Kidney (tissue), 22 donors: ENCODE measurements at regions of chr7 and their contacts with region 1.

Region 1: GRCh38 chr7:29105752-29106668 is 40.3 kb downstream of the CPVL start:
- DNase-seq: peak in 4 of 5 donors; percentile 75 to 93 (median 82)
- H3K4me3 ChIP-seq: no peak overlapping the region
- H3K27ac ChIP-seq: no peak overlapping the region
- H3K4me1 ChIP-seq: peaks cover 8 to 19% (median 14%) of the 10 kb centered on the region in 3 donors
- H3K27me3 ChIP-seq: no peaks in the 10 kb centered on the region
- CTCF ChIP-seq: peak; percentile 91

Region 2: DNA sequence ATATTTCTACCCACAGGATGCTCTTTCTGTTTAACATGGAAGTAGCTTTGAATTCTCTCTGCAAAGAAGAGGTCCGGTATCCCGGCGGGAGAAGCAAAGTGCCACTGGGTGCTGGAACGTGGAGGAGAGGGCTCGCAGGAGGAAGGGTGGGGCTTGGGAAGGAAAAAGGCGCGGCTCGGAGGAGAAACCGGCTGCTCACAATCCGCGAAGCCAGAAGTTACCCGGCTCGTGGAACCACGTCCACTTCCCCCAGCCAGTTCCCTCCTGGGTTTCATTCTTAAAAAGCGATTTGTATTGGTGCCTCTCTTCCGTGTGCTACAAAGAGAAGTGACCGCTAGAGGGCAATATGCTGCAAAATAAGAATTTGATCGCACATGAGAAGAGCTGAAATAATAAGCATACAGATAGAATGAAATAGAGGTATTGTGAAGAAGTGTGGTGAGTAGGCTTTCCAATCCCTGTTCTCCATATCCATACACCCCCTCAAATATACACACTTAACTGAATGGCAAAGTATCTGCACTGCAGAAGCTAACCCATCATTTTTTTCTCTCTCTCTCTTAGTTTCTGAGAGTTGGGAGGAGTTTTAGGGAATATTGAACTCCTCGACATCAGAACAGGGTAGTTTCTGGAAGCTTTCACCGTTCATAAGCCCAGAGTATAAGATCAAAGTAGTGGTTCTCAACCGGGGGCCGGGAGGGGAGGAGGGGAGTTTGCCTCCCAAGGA is 179.0 kb before region 1 on chr7:
- intact Hi-C with region 1: loop called (anchors 5 kb)
- DNase-seq: peak; percentile 82 to 96 (median 93)
- H3K4me3 ChIP-seq: peak overlapping the region; percentile 64 to 72 (median 65)
- H3K27ac ChIP-seq: peak overlapping the region in 1 of 2 donors; percentile 13
- H3K4me1 ChIP-seq: peaks cover 0 to 9% (median 0%) of the 10 kb centered on the region in 3 donors
- H3K27me3 ChIP-seq: no peaks in the 10 kb centered on the region
- CTCF ChIP-seq: peak; percentile 83

Region 3: DNA sequence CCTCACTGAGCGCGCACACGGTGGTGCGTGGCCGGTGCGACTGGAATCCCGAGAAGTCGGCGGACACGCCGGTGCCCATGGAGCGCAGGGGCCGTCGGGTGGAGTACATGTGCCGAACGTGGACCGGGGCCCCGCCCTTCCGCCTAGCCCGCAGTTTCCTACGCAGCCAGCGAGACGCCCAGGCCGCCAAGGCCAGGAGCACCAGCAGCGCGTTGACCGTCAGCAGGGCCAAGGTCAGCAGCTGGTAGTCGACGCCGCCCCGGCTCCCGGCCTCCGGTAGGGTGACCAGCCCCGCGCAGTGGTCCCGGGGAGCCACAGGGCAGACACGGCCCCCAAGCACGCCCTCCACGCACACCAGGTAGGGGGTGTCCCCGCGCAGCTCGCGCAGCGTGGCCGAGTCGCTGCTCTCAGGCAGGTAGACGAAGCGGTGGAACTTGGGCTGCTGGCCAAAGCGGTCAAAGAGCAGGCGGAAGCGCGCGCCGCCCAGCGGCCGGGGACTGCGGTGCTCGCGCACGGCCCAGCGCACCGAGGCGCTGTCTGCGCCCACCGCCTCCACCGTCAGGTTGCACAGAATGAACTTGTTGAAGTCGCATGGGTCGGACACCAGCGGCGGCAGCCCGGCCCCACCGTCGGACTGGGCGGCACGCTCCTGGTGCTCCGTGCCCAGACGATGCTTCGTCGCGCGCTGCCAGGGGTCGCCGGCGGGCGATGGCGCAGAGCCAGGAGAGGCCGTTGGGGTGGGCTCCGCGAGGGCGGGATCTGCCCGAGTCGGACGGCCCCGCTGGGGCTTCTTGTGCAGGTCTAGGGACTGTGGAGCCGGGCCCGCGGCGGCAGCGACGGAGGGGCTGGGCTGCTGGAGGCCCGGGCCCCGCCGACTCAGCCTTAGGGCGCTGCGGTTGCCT is 150.0 kb before region 1 on chr7:
- intact Hi-C with region 1: loop called (anchors 10 kb)
- DNase-seq: peak; percentile 89 to 95 (median 93)
- H3K4me3 ChIP-seq: peak overlapping the region; percentile 52 to 82 (median 66)
- H3K27ac ChIP-seq: peak overlapping the region; percentile 79 to 91
- H3K4me1 ChIP-seq: peaks cover 5 to 27% (median 20%) of the 10 kb centered on the region in 3 donors
- H3K27me3 ChIP-seq: no peaks in the 10 kb centered on the region
- CTCF ChIP-seq: peak; percentile 80

Region 4: DNA sequence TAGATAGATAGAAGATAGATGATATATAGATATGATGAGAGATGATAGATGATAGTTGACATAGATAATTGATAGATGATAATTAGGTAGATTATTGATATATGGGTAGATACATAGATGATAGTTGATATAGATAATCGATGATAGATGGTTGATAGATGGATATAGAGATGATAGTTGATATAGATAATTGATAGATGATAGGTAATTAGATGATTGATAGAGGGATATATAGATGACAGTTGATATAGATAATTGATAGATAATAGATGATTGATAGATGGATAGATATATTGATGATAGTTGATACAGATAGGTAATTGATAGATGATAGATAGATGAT is 530.0 kb after region 1 on chr7:
- intact Hi-C with region 1: no loop called
- DNase-seq: no peak
- H3K4me3 ChIP-seq: no peak overlapping the region
- H3K27ac ChIP-seq: no peak overlapping the region
- H3K4me1 ChIP-seq: no peaks in the 10 kb centered on the region
- H3K27me3 ChIP-seq: no peaks in the 10 kb centered on the region
- CTCF ChIP-seq: no peak